Ovary (tissue), 10 donors: ENCODE measurements at regions of chr17 and their contacts with region 1.

Region 1: DNA sequence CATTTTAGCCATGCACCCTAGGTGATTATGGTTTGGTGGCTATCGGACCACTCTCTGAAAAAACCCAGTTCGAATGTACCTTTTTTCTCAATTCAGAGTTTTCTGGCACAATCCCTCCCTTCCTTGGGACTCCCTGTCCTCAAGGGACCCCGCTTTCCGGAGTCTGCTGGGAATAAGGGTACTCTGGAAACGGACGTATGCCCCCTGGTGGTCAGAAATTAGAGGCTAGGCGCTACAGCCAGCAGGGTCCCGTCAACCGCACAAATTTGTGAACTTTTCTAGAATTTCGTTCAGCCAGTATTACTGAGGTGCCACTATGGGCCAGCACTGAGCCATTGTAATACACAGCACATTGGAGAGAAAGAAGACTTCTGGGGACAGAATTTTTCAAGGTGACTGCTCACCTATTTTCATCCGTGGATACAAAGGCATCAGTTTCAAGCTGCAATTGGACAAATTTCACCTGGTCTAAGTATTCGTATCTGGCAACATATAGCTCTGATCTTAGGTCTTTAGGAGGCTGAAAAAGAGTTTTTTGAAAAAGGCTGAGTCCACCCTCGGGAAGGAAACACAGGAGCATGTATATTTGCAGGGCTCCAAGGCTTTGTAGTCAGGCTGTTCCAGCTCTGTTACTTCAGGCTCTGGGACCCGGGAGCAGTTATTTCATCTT is 27.1 kb upstream of the CRYBA1 start:
- DNase-seq: peak; percentile 76 to 84 (median 83)
- H3K4me3 ChIP-seq: no peak overlapping the region
- H3K27ac ChIP-seq: no peak overlapping the region
- H3K4me1 ChIP-seq: peaks cover 2% of the 10 kb centered on the region
- H3K27me3 ChIP-seq: no peaks in the 10 kb centered on the region
- CTCF ChIP-seq: peak; percentile 75 to 87 (median 85)
- EP300 ChIP-seq: no peak
- POLR2A ChIP-seq: no peak

Region 2: GRCh38 chr17:29124117-29124924 is 95.2 kb before region 1 on chr17:
- intact Hi-C with region 1: loop called in 1 of 4 experiments (anchors 5 kb)
- DNase-seq: peak in 1 of 5 donors; percentile 54
- H3K4me3 ChIP-seq: no peak overlapping the region
- H3K27ac ChIP-seq: no peak overlapping the region
- H3K4me1 ChIP-seq: no peaks in the 10 kb centered on the region
- H3K27me3 ChIP-seq: no peaks in the 10 kb centered on the region
- CTCF ChIP-seq: peak in 1 of 3 donors; percentile 57
- EP300 ChIP-seq: no peak
- POLR2A ChIP-seq: no peak

Region 3: DNA sequence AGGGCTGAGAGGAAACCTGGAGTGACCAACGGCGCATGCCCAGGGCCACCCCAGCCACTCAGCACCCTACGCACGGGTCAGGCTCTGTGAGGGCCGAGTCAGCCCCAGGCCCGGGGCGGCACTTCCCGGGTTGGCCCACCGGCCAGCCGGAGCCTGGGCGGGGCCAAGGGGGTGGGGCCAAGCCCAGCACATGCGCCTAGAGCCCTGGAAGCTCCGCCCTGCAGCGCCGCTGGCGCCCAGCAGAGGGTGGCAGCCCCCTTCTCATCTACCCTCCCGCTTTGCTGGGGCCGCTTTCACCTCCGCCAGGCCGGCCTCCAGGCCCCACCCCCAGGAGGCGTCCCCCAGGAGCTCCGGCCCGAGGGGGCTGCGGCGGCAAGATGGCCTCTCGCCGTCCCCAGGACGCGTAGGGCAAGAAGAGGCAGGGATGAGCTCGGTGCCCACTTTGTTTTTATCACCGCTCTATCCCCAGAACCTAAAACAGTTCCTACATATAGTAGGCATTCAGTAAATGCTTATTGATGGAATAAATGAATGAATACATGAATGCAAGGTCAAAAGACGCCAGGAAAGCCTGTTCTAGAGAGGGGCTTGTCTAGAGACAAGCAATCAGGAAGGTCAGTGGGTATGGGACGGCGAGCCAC is 70.6 kb before region 1 on chr17:
- intact Hi-C with region 1: loop called (anchors 5 to 10 kb)
- DNase-seq: peak; percentile 90 to 97 (median 94)
- H3K4me3 ChIP-seq: peak overlapping the region; percentile 54
- H3K27ac ChIP-seq: peak overlapping the region; percentile 53 to 77
- H3K4me1 ChIP-seq: peaks cover 7% of the 10 kb centered on the region
- H3K27me3 ChIP-seq: no peaks in the 10 kb centered on the region
- CTCF ChIP-seq: peak; percentile 97
- EP300 ChIP-seq: no peak
- POLR2A ChIP-seq: peak; percentile 5

Region 4: DNA sequence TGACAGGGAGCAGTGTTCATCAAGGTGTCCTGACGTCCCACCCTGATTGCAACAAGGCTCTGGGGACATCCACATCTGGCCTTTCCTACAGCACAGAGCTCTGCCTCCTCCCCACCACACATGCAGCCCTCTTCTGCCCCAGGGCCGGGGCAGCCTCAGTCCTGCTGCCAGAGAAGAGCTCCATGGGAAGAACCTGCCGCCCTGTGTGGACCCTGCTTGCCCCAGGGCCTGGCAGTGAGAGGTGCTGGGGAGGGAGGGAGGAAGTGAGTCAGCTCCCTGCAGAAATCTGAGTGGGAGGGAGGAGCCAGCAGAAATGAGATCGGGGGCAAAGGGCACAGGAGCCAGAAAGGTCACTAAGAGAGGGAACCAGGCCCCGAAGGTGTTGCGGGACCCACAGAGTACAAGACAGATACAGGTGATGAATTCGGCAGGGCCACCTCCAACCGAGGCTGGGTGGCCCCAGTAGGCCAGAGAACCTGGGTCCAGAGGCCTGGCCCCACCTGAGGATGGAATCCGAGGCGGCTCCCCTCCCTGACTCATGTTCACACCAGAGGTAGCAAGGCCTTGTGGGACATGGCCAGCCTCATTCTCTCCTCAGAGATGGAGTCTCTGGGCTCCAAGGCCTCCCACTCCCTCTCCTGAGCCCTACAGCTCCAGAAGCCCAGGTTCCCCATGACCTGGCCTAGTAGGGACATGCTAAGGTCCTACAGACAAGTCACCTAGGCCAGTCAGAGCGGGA is 64.1 kb before region 1 on chr17:
- intact Hi-C with region 1: loop called in 1 of 4 experiments (anchors 10 kb)
- DNase-seq: peak in 2 of 5 donors; percentile 44 to 57
- H3K4me3 ChIP-seq: no peak overlapping the region
- H3K27ac ChIP-seq: peak overlapping the region in 1 of 2 donors; percentile 32
- H3K4me1 ChIP-seq: peaks cover 44% of the 10 kb centered on the region
- H3K27me3 ChIP-seq: no peaks in the 10 kb centered on the region
- CTCF ChIP-seq: no peak
- EP300 ChIP-seq: no peak
- POLR2A ChIP-seq: no peak